B cell (primary cell): ENCODE measurements at regions of chr14 and their contacts with region 1.

Region 1: GRCh38 chr14:70816525-70816924 is 7.2 kb upstream of the MAP3K9 start:
- DNase-seq: no peak
- ATAC-seq: no peak
- H3K4me3 ChIP-seq: no peak overlapping the region
- H3K4me3 Mint-ChIP-seq: no peak overlapping the region
- H3K27ac ChIP-seq: no peak overlapping the region
- H3K27ac Mint-ChIP-seq: no peak overlapping the region
- H3K4me1 ChIP-seq: peaks cover 15 to 23% of the 10 kb centered on the region in 2 donors
- H3K4me1 Mint-ChIP-seq: peaks cover 18% of the 10 kb centered on the region
- H3K27me3 ChIP-seq: peaks cover 0 to 19% (median 16%) of the 10 kb centered on the region in 4 experiments
- H3K27me3 Mint-ChIP-seq: peaks cover 25% of the 10 kb centered on the region
- CTCF ChIP-seq: no peak

Region 2: GRCh38 chr14:70600382-70601157 is 216.0 kb before region 1 on chr14 and contains the start of gene MED6:
- CTCF ChIA-PET with region 1: interaction called, 12 read pairs
- POLR2A ChIA-PET with region 1: interaction called, 7 read pairs
- intact Hi-C with region 1: no loop called
- DNase-seq: peak; percentile 93
- ATAC-seq: peak; percentile 98
- H3K4me3 ChIP-seq: peak within 1 kb of the TSS; percentile 67 to 100 (median 98)
- H3K4me3 Mint-ChIP-seq: peak within 1 kb of the TSS; percentile 99
- H3K27ac ChIP-seq: peak within 1 kb of the TSS; percentile 69 to 94
- H3K27ac Mint-ChIP-seq: peak within 1 kb of the TSS; percentile 97
- H3K4me1 ChIP-seq: peaks cover 25 to 26% of the 10 kb centered on the region in 2 donors
- H3K4me1 Mint-ChIP-seq: peaks cover 27% of the 10 kb centered on the region
- H3K27me3 ChIP-seq: no peaks in the 10 kb centered on the region
- H3K27me3 Mint-ChIP-seq: no peaks in the 10 kb centered on the region
- CTCF ChIP-seq: no peak
- total RNA-seq, gene MED6: 68.3 and 71.0 TPM in 2 replicates

Region 3: GRCh38 chr14:70640938-70641547 is 175.5 kb before region 1 on chr14:
- CTCF ChIA-PET with region 1: interaction called, 10 read pairs
- POLR2A ChIA-PET with region 1: interaction called, 4 read pairs
- intact Hi-C with region 1: loop called (anchors 5 kb)
- DNase-seq: peak; percentile 77
- ATAC-seq: peak; percentile 60
- H3K4me3 ChIP-seq: peak overlapping the region; percentile 43 to 89 (median 85)
- H3K4me3 Mint-ChIP-seq: peak overlapping the region; percentile 100
- H3K27ac ChIP-seq: peak overlapping the region; percentile 53 to 57
- H3K27ac Mint-ChIP-seq: peak overlapping the region; percentile 99
- H3K4me1 ChIP-seq: peaks cover 55 to 59% of the 10 kb centered on the region in 2 donors
- H3K4me1 Mint-ChIP-seq: peaks cover 70% of the 10 kb centered on the region
- H3K27me3 ChIP-seq: no peaks in the 10 kb centered on the region
- H3K27me3 Mint-ChIP-seq: no peaks in the 10 kb centered on the region
- CTCF ChIP-seq: no peak

Region 4: DNA sequence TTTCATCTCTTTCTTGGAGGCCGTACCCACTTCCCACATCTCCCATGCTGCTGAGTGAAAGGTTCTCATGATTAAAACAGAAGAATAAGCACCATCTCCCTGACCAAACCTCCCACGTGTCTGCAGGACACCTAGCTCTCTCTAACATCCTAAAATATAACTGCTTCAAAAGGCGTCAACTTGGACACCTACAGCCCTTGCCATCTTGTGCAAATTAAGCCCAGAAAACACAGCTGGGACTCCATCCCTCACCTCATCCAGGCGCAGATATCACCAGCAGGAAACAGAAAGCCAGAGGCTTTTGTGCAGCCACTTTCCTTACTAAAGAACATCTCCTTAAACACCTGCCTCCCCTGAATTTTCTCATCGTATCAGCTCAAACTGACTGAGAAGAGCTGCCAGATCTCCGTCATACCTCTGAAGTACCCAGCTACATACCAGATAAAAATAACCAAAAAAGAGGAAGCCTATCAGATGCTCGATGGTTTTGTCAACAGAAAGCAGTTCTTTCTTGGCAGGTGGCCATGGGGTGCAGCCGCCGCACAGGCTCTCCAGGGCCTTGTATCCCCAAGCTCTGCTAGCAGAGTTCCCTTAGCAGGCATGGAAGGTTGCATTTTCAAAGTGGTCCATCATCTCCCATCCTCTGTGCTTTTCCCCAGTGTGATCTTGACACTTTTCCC is 36.0 kb before region 1 on chr14:
- CTCF ChIA-PET with region 1: interaction called, 38 read pairs
- POLR2A ChIA-PET with region 1: interaction called, 3 read pairs
- intact Hi-C with region 1: loop called (anchors 2 kb)
- DNase-seq: peak; percentile 84
- ATAC-seq: peak; percentile 95
- H3K4me3 ChIP-seq: peak overlapping the region in 3 of 5 experiments; percentile 12 to 33 (median 17)
- H3K4me3 Mint-ChIP-seq: peak overlapping the region; percentile 69
- H3K27ac ChIP-seq: peak overlapping the region; percentile 85 to 91
- H3K27ac Mint-ChIP-seq: peak overlapping the region; percentile 94
- H3K4me1 ChIP-seq: peaks cover 40 to 47% of the 10 kb centered on the region in 2 donors
- H3K4me1 Mint-ChIP-seq: peaks cover 60% of the 10 kb centered on the region
- H3K27me3 ChIP-seq: no peaks in the 10 kb centered on the region
- H3K27me3 Mint-ChIP-seq: no peaks in the 10 kb centered on the region
- CTCF ChIP-seq: no peak

Region 5: DNA sequence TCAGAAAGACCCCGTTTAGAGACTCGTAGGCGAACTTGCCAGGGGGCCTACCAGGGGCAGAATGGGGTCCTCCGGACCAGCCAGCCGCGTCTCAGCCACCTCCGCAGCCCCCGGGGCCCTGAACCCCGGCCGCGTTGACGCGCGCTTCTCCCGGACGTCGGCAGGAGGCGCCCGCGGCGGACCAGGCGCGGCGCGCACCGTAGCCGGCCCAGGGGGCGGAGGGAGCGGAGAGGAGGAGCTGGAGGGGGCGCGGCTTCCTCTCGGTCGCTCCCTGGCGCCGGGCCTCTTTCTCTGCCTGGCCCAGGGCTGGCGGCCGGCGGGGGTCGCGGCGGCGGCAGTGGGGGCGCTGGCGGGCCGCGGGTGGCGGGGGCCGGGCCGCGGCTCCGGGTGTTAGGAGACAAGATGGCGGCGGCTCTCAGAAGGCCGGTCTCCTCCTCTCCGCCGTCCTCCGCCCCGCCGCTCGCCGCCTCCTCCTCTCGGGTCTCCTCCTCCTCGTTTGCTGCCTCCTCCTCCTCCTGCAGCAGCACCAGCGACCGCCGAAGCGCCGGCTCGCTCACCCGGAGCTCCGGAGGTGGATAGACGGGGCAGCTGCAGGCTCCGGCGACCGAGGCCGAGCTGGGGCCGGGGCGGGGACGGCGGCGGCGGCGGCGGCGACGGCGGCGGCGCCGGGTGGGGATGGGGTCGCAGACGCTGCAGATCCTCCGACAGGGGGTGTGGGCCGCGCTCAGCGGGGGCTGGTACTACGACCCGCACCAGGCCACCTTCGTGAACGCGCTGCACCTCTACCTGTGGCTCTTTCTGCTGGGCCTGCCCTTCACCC is 90.9 kb after region 1 on chr14 and contains the start of gene PCNX1:
- CTCF ChIA-PET with region 1: interaction called, 29 read pairs
- POLR2A ChIA-PET with region 1: no interaction called
- intact Hi-C with region 1: no loop called
- DNase-seq: peak; percentile 95
- ATAC-seq: peak; percentile 82
- H3K4me3 ChIP-seq: peak within 1 kb of the TSS; percentile 76 to 92 (median 84)
- H3K4me3 Mint-ChIP-seq: peak within 1 kb of the TSS; percentile 82
- H3K27ac ChIP-seq: peak within 1 kb of the TSS; percentile 87 to 95
- H3K27ac Mint-ChIP-seq: peak within 1 kb of the TSS; percentile 87
- H3K4me1 ChIP-seq: peaks cover 22 to 25% of the 10 kb centered on the region in 2 donors
- H3K4me1 Mint-ChIP-seq: peaks cover 33% of the 10 kb centered on the region
- H3K27me3 ChIP-seq: no peaks in the 10 kb centered on the region
- H3K27me3 Mint-ChIP-seq: no peaks in the 10 kb centered on the region
- CTCF ChIP-seq: peak; percentile 86
- total RNA-seq, gene PCNX1: 81.1 and 84.5 TPM in 2 replicates

Region 6: DNA sequence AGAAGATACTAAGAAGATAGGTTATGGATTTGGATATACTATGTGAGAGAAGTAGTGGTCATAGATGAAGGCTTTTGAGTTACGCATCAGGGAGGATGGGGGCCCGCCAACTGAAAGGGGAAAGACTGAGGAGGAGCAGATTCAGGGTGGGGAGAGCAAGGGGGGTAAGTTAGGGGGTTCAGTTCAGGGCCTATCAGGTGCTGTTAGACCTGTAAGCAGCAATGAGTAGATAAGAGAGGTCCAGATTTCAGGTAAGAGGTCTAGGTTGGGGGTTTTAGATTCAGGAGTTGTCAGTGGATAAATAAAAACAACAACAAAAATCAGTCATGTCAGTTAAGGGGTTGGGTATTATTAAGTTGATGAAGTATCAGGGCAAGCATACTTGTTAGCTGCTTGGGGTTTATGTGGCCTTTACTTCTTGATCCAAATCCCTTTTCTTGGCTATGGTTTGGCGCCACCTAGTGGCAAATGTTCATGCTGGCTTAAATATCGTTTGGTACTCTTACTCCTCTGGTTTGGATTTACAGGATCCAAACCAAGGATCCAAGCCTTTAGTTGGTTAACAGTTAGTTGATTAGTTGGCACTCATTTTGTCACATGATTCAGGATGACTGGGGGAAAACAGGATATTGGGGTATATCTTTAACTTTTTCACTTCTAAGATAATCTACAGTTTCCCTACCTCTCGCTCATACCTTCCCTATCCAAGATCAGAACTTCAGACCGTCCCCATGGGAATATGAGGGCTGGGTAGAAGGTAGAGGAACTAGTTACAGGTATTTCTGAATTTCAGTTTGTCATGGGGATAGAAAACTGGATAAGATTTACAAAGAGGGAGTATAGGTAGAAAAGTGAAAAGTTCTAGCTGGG is 155.8 kb after region 1 on chr14:
- CTCF ChIA-PET with region 1: interaction called, 13 read pairs
- POLR2A ChIA-PET with region 1: no interaction called
- intact Hi-C with region 1: loop called (anchors 1 kb)
- DNase-seq: peak; percentile 87
- ATAC-seq: peak; percentile 75
- H3K4me3 ChIP-seq: no peak overlapping the region
- H3K4me3 Mint-ChIP-seq: no peak overlapping the region
- H3K27ac ChIP-seq: no peak overlapping the region
- H3K27ac Mint-ChIP-seq: no peak overlapping the region
- H3K4me1 ChIP-seq: no peaks in the 10 kb centered on the region
- H3K4me1 Mint-ChIP-seq: peaks cover 1% of the 10 kb centered on the region
- H3K27me3 ChIP-seq: no peaks in the 10 kb centered on the region
- H3K27me3 Mint-ChIP-seq: no peaks in the 10 kb centered on the region
- CTCF ChIP-seq: peak; percentile 94